Endothelial cell of umbilical vein (primary cell): ENCODE measurements at regions of chr15 and their contacts with region 1.

Region 1: GRCh38 chr15:44215594-44215993 is 20.5 kb upstream of the FRMD5 start:
- DNase-seq: peak; percentile 61
- H3K4me3 ChIP-seq: peak overlapping the region in 1 of 3 experiments; percentile 13
- H3K27ac ChIP-seq: no peak overlapping the region
- H3K4me1 ChIP-seq: peaks cover 14% of the 10 kb centered on the region
- H3K27me3 ChIP-seq: no peaks in the 10 kb centered on the region
- CTCF ChIP-seq: no peak
- POLR2A ChIP-seq: no peak

Region 2: GRCh38 chr15:43872416-43873020 is 343.1 kb before region 1 on chr15:
- CTCF ChIA-PET with region 1: no interaction called
- POLR2A ChIA-PET with region 1: no interaction called
- dilution Hi-C with region 1: no loop called
- intact Hi-C with region 1: loop called (anchors 1 kb)
- DNase-seq: peak; percentile 70
- H3K4me3 ChIP-seq: no peak overlapping the region
- H3K27ac ChIP-seq: no peak overlapping the region
- H3K4me1 ChIP-seq: peaks cover 3% of the 10 kb centered on the region
- H3K27me3 ChIP-seq: no peaks in the 10 kb centered on the region
- CTCF ChIP-seq: peak; percentile 55 to 68
- POLR2A ChIP-seq: no peak

Region 3: GRCh38 chr15:43903864-43904290 is 311.7 kb before region 1 on chr15:
- CTCF ChIA-PET with region 1: interaction called, 10 read pairs
- POLR2A ChIA-PET with region 1: no interaction called
- dilution Hi-C with region 1: no loop called
- intact Hi-C with region 1: loop called (anchors 1 kb)
- DNase-seq: peak; percentile 71
- H3K4me3 ChIP-seq: no peak overlapping the region
- H3K27ac ChIP-seq: no peak overlapping the region
- H3K4me1 ChIP-seq: no peaks in the 10 kb centered on the region
- H3K27me3 ChIP-seq: no peaks in the 10 kb centered on the region
- CTCF ChIP-seq: peak; percentile 62 to 81
- POLR2A ChIP-seq: no peak

Region 4: DNA sequence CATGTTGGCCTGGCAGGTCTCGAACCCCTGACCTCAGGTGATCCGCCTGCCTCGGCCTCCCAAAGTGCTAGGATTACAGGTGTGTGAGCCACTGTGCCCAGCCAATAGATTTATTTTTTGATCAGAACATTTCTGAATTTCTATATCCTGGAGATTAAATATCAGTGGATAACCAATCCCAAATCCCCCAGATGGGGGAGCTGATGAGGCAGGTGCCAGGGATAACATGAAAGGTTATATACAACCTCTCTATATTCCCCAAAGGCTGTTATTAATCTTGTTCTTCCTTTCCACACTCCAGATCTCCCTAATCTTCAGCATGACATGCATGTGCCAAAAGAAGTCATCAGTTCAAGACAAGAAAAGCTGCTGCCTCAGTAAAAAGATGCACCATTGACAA is 276.5 kb before region 1 on chr15:
- CTCF ChIA-PET with region 1: interaction called, 9 read pairs
- POLR2A ChIA-PET with region 1: no interaction called
- dilution Hi-C with region 1: no loop called
- intact Hi-C with region 1: loop called (anchors 2 kb)
- DNase-seq: peak; percentile 64
- H3K4me3 ChIP-seq: no peak overlapping the region
- H3K27ac ChIP-seq: no peak overlapping the region
- H3K4me1 ChIP-seq: no peaks in the 10 kb centered on the region
- H3K27me3 ChIP-seq: no peaks in the 10 kb centered on the region
- CTCF ChIP-seq: peak; percentile 47 to 57
- POLR2A ChIP-seq: no peak

Region 5: DNA sequence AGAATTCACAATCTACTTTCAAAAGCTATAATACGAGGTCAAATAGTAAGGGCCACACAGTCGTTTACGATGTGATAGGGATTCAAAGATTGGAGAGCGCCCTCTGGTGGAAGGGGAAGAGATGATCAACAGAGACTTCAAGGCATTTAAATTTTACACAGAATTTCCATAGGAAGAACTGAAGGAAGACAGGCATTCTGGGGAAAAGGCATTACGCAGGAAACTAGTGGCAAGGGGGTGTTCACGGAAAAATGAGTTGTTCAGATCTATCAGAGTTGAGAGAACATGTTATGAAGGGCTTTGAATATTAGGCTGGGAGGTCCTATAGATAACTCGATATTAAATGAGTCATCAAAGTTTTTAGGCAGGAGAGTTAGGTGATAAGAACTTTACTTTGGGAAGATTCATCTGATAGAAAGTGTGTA is 149.3 kb before region 1 on chr15:
- CTCF ChIA-PET with region 1: interaction called, 3 read pairs
- POLR2A ChIA-PET with region 1: no interaction called
- dilution Hi-C with region 1: no loop called
- intact Hi-C with region 1: loop called (anchors 1 kb)
- DNase-seq: peak; percentile 87
- H3K4me3 ChIP-seq: no peak overlapping the region
- H3K27ac ChIP-seq: peak overlapping the region; percentile 2
- H3K4me1 ChIP-seq: no peaks in the 10 kb centered on the region
- H3K27me3 ChIP-seq: no peaks in the 10 kb centered on the region
- CTCF ChIP-seq: peak; percentile 60 to 74
- POLR2A ChIP-seq: no peak

Region 6: DNA sequence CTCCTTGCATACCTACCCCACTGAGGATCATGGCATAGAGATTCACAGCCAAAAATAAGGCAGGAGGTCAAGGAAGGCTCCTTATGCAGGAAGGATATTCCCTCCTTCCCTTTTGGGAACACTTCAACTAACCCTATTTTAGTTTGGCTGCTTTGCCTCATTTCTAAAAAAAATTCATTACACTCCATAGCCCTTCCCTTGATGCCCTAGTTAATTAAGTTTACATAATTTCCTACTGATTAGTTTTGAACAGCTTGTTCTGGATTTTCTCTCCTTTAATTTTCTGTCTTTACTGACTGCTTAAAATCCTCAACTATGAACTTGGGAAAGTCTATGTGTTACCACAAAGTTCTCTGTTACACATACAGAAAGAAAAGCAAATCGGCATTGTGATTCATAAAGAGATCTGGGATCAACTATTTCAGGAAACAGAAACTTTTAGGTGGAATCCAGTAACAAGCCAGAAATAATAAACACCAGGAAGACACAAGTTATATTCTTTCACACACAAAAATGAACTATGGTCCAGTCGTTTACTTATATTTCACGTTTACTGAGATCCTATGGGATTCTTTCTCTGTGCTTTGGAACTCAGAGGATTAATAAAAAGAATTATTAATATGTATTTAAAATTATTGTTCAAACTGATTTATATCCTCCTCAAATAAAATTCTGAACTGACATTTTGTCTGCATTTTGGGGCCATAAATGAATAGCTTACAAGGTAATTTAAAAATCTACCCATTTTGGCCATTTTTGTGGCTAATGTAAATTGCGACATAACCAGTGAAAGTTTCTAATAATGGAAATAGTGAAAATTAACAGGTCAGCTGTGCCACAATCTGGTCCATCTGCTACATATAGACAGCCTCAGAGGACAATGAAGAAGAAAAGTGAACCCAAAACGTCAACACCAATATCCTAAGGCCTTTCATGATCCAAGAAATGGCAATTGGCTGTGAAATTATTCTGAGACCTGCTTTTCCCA is 134.3 kb before region 1 on chr15:
- CTCF ChIA-PET with region 1: no interaction called
- POLR2A ChIA-PET with region 1: interaction called, 6 read pairs
- dilution Hi-C with region 1: no loop called
- intact Hi-C with region 1: loop called (anchors 5 kb)
- DNase-seq: peak; percentile 90
- H3K4me3 ChIP-seq: peak overlapping the region in 1 of 3 experiments; percentile 17
- H3K27ac ChIP-seq: peak overlapping the region; percentile 80
- H3K4me1 ChIP-seq: peaks cover 48% of the 10 kb centered on the region
- H3K27me3 ChIP-seq: no peaks in the 10 kb centered on the region
- CTCF ChIP-seq: no peak
- POLR2A ChIP-seq: no peak

Region 7: DNA sequence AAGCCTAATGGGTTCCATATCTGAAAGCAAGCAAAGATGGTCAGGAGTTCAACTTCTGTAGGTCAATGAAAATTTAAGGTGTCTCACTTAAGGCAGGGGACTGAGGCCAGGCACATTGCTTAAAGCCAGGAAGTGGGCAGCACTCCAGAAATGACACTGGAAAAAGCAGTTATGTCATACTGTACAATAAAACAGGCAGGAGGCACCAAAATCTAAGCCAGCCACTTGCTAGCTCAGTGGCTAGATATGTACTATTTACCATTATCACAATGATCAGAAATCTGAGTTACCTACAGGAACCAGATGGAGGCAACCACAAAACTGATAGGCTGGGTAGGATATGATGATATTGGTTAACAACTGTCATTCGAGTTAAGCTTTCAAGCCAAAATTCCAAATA is 77.8 kb before region 1 on chr15:
- CTCF ChIA-PET with region 1: interaction called, 3 read pairs
- POLR2A ChIA-PET with region 1: no interaction called
- dilution Hi-C with region 1: no loop called
- intact Hi-C with region 1: loop called (anchors 5 kb)
- DNase-seq: peak; percentile 80
- H3K4me3 ChIP-seq: no peak overlapping the region
- H3K27ac ChIP-seq: no peak overlapping the region
- H3K4me1 ChIP-seq: peaks cover 14% of the 10 kb centered on the region
- H3K27me3 ChIP-seq: no peaks in the 10 kb centered on the region
- CTCF ChIP-seq: no peak
- POLR2A ChIP-seq: no peak

Region 8: GRCh38 chr15:44265757-44266156 is 50.2 kb after region 1 on chr15:
- CTCF ChIA-PET with region 1: no interaction called
- POLR2A ChIA-PET with region 1: no interaction called
- dilution Hi-C with region 1: no loop called
- intact Hi-C with region 1: no loop called
- DNase-seq: no peak
- H3K4me3 ChIP-seq: no peak overlapping the region
- H3K27ac ChIP-seq: no peak overlapping the region
- H3K4me1 ChIP-seq: no peaks in the 10 kb centered on the region
- H3K27me3 ChIP-seq: peaks cover 5 to 9% of the 10 kb centered on the region in 2 experiments
- CTCF ChIP-seq: no peak
- POLR2A ChIP-seq: no peak